Prostate gland (tissue), 2 donors: ENCODE measurements at regions of chr2 and their contacts with region 1.

Region 1: DNA sequence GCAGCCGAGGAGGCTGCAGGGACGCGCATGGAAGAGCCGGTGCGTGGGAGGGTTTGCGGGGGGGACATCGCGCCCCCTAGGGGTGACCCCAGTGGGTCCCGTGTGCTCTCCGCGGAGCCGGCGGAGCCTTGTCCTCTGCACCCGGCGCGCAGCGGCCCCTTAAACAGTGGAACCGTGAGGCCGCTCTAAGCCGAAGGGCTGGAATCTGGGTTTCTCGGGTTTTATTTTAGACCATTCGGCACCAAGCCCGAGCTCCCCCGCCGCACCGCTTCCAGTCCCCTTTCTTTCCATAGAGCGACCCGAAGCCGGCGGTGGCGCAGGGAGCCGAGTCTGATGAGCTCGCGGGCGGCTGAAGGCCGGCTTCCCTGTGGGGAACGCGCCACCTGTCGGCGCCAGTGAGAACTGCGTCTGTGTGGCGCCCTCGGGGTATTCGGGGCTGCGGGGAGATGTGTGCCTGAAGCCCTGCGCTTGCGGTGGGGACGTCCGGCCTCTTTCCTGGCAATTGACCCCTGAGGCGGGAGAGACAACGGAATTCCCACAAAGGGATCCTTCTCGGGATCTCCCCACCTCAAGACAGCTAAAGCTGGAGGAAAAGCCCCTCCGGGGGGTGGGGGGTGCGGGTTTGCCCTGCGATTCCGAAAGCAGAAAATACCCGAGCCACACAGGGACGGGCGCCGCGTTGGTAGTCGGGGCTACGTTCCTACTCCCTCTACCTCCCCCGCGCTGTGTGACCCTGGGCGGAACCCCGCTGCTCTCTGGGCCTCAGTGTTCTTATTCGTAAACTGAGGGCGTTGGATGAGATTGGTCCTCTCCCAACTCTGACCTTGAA is 8.2 kb upstream of the EN1 start:
- DNase-seq: peak; percentile 53
- H3K4me3 ChIP-seq: no peak overlapping the region
- H3K27ac ChIP-seq: no peak overlapping the region
- H3K4me1 ChIP-seq: no peaks in the 10 kb centered on the region
- H3K27me3 ChIP-seq: peaks cover 77% of the 10 kb centered on the region
- CTCF ChIP-seq: peak; percentile 87 to 94 (median 92)
- POLR2A ChIP-seq: no peak

Region 2: DNA sequence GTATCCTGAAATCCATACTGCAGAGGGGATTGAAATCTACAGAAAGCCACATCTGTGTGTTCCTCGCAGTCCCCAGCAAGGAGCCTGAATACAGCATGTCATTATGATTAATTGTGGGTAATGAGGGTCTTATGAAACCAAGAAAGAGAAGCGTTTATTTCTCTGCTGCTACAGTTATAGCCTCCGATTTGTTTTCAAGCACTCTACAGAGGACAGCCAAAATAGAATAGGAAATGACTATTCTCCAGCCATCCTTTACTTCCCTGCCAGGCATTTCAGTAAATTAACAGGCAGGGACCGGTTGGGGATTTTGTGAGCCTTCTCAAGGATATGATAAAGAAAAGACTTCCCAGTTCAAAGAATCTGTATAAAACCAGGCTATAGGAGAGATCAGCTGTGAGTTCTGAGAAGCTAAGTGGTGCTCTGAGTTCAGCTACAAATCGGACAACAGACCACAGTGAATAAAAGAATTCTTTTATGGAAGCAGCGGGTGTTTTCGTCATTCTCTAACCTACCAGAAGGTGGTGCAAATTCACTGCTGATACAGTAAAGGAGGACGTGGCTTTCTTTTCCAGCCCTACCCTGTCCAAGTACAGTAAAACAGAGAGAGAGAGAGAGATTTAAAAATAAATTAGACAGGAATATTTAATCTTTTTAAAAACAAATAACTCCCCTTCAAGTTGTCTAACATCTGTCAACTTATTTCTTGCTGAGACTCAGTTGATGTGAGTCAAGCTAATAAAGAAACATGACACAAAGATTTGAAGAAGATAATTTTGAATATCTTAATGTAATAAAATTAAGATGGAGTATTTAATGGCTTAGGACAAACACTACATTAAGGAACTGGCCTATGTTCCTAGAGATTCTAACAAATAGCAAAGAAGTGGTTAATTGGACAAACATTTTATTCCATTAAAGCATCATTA is 633.7 kb before region 1 on chr2:
- intact Hi-C with region 1: loop called (anchors 5 kb)
- DNase-seq: peak; percentile 31
- H3K4me3 ChIP-seq: no peak overlapping the region
- H3K27ac ChIP-seq: no peak overlapping the region
- H3K4me1 ChIP-seq: no peaks in the 10 kb centered on the region
- H3K27me3 ChIP-seq: peaks cover 32% of the 10 kb centered on the region
- CTCF ChIP-seq: peak in 3 of 4 experiments; percentile 32 to 65 (median 51)
- POLR2A ChIP-seq: no peak

Region 3: GRCh38 chr2:119170504-119170903 is 314.8 kb after region 1 on chr2:
- intact Hi-C with region 1: no loop called
- DNase-seq: no peak
- H3K4me3 ChIP-seq: no peak overlapping the region
- H3K27ac ChIP-seq: no peak overlapping the region
- H3K4me1 ChIP-seq: no peaks in the 10 kb centered on the region
- H3K27me3 ChIP-seq: no peaks in the 10 kb centered on the region
- CTCF ChIP-seq: no peak
- POLR2A ChIP-seq: no peak